Activated T-helper 1 cell treated with anti-CD3 and anti-CD28 coated beads, Interleukin-12 subunit alpha, Interleukin-12 subunit beta, Interleukin-2, Interleukin-4 antibody, amounts not matched to agents 30 ng/mL and 10 ng/mL and 1 ng/mL, durations not matched to agents 14 hours and 24 hours and 36 hours (primary cell): ENCODE measurements at regions of chr6 and their contacts with region 1.

Region 1: DNA sequence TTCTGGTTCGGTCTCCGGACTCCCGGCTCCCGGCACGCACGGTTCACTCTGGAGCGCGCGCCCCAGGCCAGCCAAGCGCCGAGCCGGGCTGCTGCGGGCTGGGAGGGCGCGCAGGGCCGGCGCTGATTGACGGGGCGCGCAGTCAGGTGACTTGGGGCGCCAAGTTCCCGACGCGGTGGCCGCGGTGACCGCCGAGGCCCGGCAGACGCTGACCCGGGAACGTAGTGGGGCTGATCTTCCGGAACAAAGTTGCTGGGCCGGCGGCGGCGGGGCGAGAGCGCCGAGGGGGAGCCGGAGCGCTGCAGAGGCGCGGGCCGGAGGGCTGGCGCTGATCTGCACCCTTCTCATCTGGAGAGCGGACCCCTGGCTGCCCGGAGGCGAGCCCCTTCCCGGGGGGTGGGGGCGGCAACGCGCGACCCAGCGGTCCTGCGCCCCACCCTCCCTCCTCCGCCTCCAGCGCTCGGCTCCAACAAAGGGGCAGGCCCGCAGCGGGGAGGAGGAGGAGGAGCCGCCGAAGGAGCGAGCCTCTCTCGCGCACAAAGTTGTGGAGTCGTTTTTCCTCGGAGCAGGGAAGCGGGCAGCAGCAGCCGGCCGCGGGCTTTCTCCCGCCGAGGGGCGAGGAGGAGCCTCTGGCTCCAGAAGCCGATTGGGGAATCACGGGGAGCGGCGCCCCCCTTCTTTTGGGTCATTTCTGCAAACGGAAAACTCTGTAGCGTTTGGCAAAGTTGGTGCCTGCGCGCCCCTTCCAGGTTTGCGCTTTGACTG is at the start of gene UTRN:
- DNase-seq: peak; percentile 29
- H3K4me3 Mint-ChIP-seq: peak within 1 kb of the TSS; percentile 93
- H3K27ac Mint-ChIP-seq: peak within 1 kb of the TSS; percentile 64
- H3K4me1 Mint-ChIP-seq: peaks cover 19% of the 10 kb centered on the region
- H3K27me3 Mint-ChIP-seq: peaks cover 33% of the 10 kb centered on the region
- total RNA-seq, gene UTRN: 48.3 and 50.6 TPM in 2 replicates

Region 2: DNA sequence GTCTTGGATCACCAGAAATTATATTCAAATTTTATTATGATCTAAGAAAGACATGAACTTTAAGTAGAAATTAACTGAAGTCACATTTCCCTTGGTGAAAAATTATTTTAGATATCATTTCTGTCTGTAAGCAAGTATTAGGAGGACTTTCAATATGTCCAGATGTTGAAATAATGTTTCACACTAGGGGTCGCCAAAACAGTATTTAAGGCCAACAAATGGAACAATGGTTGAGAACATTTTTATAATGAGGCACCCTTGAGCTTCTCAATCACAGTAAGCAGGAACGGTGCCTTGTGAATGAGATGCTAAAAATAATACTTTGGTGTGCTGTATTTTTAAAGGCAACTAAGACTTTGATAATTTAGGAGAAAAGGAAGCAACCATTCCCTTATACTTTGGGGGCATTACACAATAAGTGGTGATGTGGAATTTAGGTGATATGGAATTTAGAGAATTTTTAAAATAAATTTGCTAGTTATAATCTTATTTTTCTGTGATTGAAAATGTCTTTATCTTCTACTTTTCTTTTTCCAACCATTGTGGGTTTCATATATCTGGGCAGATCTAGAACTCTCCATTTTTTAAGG is 180.0 kb before region 1 on chr6:
- intact Hi-C with region 1: loop called (anchors 2 kb)
- DNase-seq: peak; percentile 25
- H3K4me3 Mint-ChIP-seq: no peak overlapping the region
- H3K27ac Mint-ChIP-seq: no peak overlapping the region
- H3K4me1 Mint-ChIP-seq: peaks cover 13% of the 10 kb centered on the region
- H3K27me3 Mint-ChIP-seq: peaks cover 7% of the 10 kb centered on the region

Region 3: DNA sequence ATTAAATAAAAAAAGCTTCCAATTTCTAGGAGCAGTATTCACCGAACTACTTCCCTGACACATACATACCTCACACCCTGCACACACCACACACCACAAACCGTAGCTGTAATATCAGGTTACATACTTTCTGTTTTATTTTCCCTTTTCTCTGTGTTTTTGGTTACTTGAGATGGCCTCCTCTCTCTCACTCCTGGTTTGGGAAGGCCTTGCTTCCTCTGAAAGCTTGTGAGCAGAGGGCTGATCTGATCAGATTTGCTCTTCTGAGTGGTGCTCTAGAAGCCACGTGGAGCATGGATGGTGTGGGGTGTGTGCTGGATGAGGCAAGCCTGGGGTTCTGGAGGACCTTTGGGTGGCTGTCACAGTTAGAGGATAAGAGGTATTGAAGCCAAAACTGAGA is 21.0 kb after region 1 on chr6:
- intact Hi-C with region 1: loop called (anchors 1 kb)
- DNase-seq: peak; percentile 41
- H3K4me3 Mint-ChIP-seq: peak overlapping the region; percentile 58
- H3K27ac Mint-ChIP-seq: peak overlapping the region; percentile 85
- H3K4me1 Mint-ChIP-seq: peaks cover 51% of the 10 kb centered on the region
- H3K27me3 Mint-ChIP-seq: peaks cover 6% of the 10 kb centered on the region

Region 4: GRCh38 chr6:144343701-144344428 is 58.9 kb after region 1 on chr6:
- intact Hi-C with region 1: loop called (anchors 2 kb)
- DNase-seq: peak; percentile 36
- H3K4me3 Mint-ChIP-seq: peak overlapping the region; percentile 96
- H3K27ac Mint-ChIP-seq: peak overlapping the region; percentile 98
- H3K4me1 Mint-ChIP-seq: peaks cover 65% of the 10 kb centered on the region
- H3K27me3 Mint-ChIP-seq: no peaks in the 10 kb centered on the region

Region 5: DNA sequence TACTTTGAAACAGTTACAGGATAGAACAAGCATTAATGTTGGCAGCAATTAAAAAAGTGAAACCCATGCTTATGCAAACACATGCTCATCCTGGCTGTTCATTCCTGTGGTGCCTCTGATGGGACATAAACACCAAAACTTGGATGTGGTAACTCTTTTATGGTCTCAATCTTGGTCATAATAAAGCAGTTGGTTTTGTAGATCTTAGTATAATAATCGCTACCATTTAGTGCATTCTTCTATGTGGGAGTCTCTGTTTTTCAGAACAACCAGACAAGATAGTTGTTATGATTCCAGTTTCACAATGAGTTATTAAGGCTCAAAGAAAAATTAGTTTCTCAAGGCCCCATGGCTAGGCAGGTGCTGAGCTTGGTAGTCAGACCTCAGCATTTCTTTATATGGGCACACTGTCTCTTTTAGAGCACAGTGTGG is 184.2 kb after region 1 on chr6:
- intact Hi-C with region 1: loop called (anchors 5 kb)
- DNase-seq: no peak
- H3K4me3 Mint-ChIP-seq: peak overlapping the region; percentile 54
- H3K27ac Mint-ChIP-seq: peak overlapping the region; percentile 86
- H3K4me1 Mint-ChIP-seq: peaks cover 27% of the 10 kb centered on the region
- H3K27me3 Mint-ChIP-seq: no peaks in the 10 kb centered on the region